Right lobe of liver (tissue), 6 donors: ENCODE measurements at regions of chr6 and their contacts with region 1.

Region 1: GRCh38 chr6:167485186-167485978 is 160.5 kb downstream of the TTLL2 start:
- DNase-seq: no peak
- ATAC-seq: peak; percentile 88 to 95 (median 92)
- H3K4me3 ChIP-seq: no peak overlapping the region
- H3K27ac ChIP-seq: no peak overlapping the region
- H3K4me1 ChIP-seq: no peaks in the 10 kb centered on the region
- H3K27me3 ChIP-seq: no peaks in the 10 kb centered on the region
- CTCF ChIP-seq: peak; percentile 53 to 71 (median 66)
- POLR2A ChIP-seq: no peak

Region 2: DNA sequence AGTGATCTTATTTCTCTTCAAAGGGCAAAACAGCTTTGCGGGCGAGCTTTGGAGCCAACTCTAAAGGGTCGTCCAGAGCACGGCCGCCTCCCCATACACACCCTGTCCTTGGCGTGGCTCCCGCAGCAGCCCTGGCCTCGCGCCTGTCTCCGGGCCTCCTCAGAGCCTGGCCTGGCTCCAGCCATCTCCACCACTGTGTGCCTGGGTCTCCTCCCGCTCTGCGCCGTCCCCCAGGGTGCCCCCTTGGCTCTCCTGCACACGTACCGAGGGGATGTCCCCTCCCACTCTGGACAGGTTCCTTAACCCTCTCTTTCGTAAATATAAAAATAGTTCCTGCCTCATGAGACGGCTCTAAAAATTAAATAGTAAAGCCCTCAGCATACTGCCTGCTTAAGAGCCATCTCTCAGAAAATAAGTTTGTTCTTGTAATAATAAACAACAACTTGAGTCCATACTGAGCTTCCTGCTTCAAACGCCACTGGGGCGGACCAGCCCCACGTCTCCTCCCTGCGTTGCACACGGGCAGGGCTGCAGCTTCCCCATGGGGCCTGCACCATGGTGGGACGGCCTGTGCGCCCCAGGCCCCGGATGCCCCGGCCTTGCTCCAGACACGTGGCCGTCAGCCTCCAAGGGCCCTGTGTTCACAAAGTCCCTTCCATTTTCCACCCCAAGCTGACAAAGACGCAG is 65.7 kb after region 1 on chr6:
- intact Hi-C with region 1: no loop called
- DNase-seq: peak in 2 of 3 donors; percentile 51 to 84
- ATAC-seq: peak; percentile 49 to 80 (median 64)
- H3K4me3 ChIP-seq: no peak overlapping the region
- H3K27ac ChIP-seq: peak overlapping the region in 1 of 3 donors; percentile 40
- H3K4me1 ChIP-seq: no peaks in the 10 kb centered on the region
- H3K27me3 ChIP-seq: no peaks in the 10 kb centered on the region
- CTCF ChIP-seq: no peak
- POLR2A ChIP-seq: no peak

Region 3: GRCh38 chr6:167898673-167899311 is 413.4 kb after region 1 on chr6:
- intact Hi-C with region 1: loop called (anchors 10 kb)
- DNase-seq: no peak
- ATAC-seq: peak; percentile 62 to 73 (median 67)
- H3K4me3 ChIP-seq: no peak overlapping the region
- H3K27ac ChIP-seq: no peak overlapping the region
- H3K4me1 ChIP-seq: peaks cover 0 to 16% (median 3%) of the 10 kb centered on the region in 4 donors
- H3K27me3 ChIP-seq: no peaks in the 10 kb centered on the region
- CTCF ChIP-seq: peak; percentile 69 to 78 (median 74)
- POLR2A ChIP-seq: no peak

Region 4: GRCh38 chr6:167907837-167908681 is 422.7 kb after region 1 on chr6:
- intact Hi-C with region 1: loop called in 1 of 2 experiments (anchors 10 kb)
- DNase-seq: no peak
- ATAC-seq: peak; percentile 64 to 74 (median 66)
- H3K4me3 ChIP-seq: no peak overlapping the region
- H3K27ac ChIP-seq: no peak overlapping the region
- H3K4me1 ChIP-seq: peaks cover 0 to 13% (median under 1%) of the 10 kb centered on the region in 4 donors
- H3K27me3 ChIP-seq: no peaks in the 10 kb centered on the region
- CTCF ChIP-seq: peak; percentile 47 to 68 (median 56)
- POLR2A ChIP-seq: no peak